Activated B cell treated with CpG ODN at 0.5 μM for 24 hours (primary cell): ENCODE measurements at regions of chr6 and their contacts with region 1.

Region 1: DNA sequence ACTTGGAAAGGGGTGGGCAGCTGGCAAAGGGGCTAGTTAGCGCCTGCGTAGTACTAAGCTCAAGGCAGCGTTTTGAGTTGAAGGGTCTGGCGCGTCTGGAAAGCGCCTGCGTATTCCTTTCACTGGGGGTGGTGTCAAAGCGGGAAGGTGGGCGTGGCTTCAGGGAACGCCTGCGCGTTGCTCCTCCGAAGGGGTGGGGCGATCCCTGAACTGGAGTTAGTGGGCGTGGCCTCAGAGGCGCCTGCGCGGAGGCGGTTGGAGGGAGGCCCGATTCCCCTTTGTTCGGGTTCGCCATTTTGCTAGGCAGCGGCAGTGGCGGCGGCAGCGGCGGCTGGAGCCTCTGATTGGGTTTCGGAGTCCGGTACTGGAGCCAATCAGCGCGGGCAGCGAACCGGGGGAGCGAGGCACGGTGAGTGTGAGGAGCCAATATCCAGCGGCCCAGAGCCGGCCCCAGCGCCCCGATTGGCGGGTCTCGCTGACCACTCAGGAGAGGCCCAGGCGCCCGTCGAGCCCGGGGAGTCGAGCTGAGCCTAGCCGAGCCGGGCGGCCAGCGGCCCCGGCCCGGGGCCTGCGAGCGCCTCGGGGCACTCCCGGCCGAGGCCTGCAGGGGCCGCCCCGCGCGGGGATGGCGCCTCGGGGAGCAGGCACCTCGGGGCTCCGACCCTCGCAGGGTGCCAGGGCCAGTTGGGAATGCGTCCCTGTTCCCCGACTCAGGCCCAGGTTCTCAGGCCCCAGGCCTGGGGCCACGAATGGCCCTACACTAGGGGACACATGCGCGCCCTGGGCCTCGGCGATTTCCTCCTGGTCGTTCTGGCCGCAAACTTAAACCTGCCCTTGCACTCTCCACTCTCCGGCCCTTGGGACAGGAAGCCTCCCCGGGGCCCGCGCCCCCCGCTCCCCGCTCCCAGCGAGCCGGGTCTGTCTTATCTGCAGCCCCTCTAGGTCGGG is at the start of gene NFYA:
- DNase-seq: peak; percentile 100
- ATAC-seq: peak; percentile 63
- H3K4me3 Mint-ChIP-seq: peak within 1 kb of the TSS; percentile 96
- H3K27ac Mint-ChIP-seq: peak within 1 kb of the TSS; percentile 98
- H3K4me1 Mint-ChIP-seq: peaks cover 47% of the 10 kb centered on the region
- H3K27me3 Mint-ChIP-seq: no peaks in the 10 kb centered on the region
- CTCF ChIP-seq: no peak
- total RNA-seq, gene NFYA: 33.7 and 35.1 TPM in 2 replicates

Region 2: DNA sequence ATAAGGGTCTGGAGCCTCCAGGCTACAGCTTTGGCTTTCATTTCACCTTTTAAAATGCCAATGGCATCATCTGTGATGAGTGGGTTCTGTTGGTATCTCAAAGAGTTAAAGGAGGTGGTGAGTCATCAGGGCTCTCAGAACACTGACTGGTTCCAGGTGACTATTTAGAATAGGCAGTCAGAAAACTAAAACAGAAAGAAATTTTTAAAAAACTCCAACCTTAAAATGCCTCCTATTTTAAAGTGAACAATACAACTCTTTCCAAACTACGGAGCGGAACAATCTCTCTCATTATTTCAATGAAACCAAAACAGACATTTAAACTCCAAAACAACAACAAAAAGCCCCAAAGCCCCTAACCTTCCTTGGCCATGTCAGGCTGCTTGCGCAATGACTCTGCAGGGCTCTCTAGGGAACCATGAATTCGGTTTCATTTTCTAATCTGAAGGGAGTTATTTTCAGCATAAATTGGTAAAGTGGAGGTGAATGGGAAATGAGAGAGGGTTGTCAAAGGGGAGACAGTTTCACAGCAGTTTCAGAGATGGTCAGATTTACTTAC is 1542.7 kb before region 1 on chr6:
- CTCF ChIA-PET with region 1: no interaction called
- POLR2A ChIA-PET with region 1: no interaction called
- intact Hi-C with region 1: no loop called
- DNase-seq: no peak
- ATAC-seq: peak; percentile 90
- H3K4me3 Mint-ChIP-seq: peak overlapping the region; percentile 64
- H3K27ac Mint-ChIP-seq: peak overlapping the region; percentile 69
- H3K4me1 Mint-ChIP-seq: peaks cover 14% of the 10 kb centered on the region
- H3K27me3 Mint-ChIP-seq: peaks cover 9% of the 10 kb centered on the region
- CTCF ChIP-seq: no peak

Region 3: DNA sequence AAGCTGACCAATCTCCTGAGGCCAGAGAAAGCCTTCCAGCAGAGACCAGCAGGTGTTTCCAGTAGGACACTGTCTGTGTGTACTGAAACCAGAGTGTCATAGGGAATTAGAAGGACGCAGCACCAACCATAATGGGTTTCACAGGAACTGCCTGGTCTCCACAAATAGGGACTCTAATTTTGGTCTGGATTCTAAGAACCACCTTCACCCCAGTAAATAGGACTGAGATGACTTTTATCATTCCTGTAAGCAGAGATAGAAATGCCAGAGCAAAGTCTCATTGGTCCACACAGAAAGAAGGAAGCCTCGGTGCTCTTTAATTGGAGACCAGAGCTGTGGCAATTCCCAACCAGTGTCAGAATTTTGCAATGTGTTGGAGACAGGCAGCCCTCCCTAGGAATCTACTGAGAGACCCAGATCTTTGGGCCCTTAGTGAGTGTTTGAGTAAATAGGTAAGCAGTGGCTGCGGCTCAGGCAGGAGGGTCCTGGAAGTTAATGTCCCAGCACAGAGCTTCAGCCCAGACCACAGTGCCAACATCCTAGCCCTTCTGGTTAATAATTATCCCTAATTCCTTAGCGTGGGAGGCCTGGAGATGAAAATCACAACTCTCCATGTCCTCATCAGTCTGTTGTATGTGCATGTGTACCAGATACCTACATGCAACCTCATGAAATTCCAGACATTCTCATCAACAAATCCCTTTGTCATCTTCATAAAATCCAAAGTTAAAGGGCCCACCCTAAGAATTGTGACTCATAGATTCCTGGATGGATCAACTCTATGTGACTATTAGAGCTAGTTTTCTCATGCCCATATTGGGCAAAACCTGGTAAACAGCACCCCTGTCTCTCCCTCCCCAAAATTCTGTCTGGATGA is 115.1 kb before region 1 on chr6:
- CTCF ChIA-PET with region 1: no interaction called
- POLR2A ChIA-PET with region 1: no interaction called
- intact Hi-C with region 1: no loop called
- DNase-seq: no peak
- ATAC-seq: no peak
- H3K4me3 Mint-ChIP-seq: no peak overlapping the region
- H3K27ac Mint-ChIP-seq: no peak overlapping the region
- H3K4me1 Mint-ChIP-seq: no peaks in the 10 kb centered on the region
- H3K27me3 Mint-ChIP-seq: peaks cover 2% of the 10 kb centered on the region
- CTCF ChIP-seq: no peak

Region 4: DNA sequence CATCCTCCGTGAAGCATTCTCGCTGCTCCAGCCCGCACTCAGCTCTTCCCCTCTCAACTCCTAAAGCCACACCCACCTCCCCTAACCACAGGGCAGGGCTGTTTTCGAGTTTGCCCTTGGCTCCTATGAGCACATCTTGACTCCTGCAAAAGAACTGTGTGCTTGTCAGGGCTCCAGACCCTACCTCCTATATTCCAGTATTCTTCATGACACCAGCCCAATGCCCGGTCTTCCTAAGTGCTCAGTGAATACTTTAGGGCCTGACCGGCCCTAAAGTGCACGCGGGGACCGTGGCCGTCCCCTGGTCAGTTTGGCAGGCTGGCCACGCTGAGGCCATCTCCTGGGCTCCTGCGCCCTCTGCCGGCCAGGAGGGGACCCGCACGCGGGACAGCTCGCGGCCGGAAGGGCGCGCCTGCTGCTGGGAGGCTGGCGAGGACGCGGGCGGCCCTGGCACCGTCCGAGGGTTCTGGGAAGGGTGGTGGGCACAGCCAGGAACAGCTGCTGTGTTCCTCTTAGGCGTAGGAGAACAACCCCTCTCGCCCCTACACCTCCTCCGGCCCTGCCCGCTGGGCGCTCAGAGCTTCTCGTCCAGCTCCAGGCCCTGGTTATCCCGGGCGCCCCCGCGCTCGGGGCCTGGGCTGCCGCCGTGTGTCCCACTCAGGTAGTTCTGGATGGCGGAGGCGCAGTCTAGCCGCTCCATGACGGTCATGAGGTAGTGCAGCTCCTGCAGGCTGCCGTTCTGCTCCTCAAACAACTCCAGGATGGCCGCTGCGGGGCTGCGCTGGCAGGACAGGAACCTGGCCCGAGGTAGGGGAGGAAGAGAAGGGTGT is 44.9 kb before region 1 on chr6:
- CTCF ChIA-PET with region 1: interaction called, 7 read pairs
- POLR2A ChIA-PET with region 1: interaction called, 10 read pairs
- intact Hi-C with region 1: no loop called
- DNase-seq: peak; percentile 80
- ATAC-seq: peak; percentile 89
- H3K4me3 Mint-ChIP-seq: peak overlapping the region; percentile 84
- H3K27ac Mint-ChIP-seq: peak overlapping the region; percentile 20
- H3K4me1 Mint-ChIP-seq: peaks cover 20% of the 10 kb centered on the region
- H3K27me3 Mint-ChIP-seq: no peaks in the 10 kb centered on the region
- CTCF ChIP-seq: peak; percentile 92

Region 5: DNA sequence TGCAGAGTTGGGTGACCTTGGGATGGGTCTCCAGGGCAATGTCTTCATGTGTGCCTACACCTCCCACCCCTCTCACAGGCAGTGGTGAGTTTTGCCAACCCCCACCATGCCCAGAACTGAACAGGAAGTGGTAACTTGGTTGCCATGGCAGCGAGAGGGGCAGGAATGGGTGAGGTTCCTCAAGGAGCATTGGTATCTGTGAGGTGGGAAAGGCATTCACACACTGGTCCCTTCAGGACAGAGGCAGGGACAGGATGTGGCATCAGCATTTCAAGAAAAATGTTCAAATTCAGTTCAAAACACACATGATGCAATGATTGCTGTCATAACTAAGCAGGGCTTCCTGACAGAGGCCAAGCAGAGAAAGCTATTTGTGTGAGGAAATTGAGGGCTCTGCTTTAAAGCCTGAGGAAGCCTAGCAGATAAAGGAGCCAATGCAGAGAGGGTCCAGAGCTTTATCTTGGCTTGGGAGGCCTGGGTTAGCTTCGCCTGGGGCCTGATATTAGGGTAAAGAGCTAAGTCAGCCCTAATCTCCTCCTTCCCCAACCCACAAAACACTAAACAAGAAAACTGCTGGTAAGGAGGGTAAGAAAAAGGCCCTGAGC is 127.4 kb after region 1 on chr6:
- CTCF ChIA-PET with region 1: no interaction called
- POLR2A ChIA-PET with region 1: interaction called, 10 read pairs
- intact Hi-C with region 1: loop called (anchors 1 kb)
- DNase-seq: no peak
- ATAC-seq: peak; percentile 29
- H3K4me3 Mint-ChIP-seq: peak overlapping the region; percentile 75
- H3K27ac Mint-ChIP-seq: peak overlapping the region; percentile 96
- H3K4me1 Mint-ChIP-seq: peaks cover 86% of the 10 kb centered on the region
- H3K27me3 Mint-ChIP-seq: no peaks in the 10 kb centered on the region
- CTCF ChIP-seq: no peak

Region 6: GRCh38 chr6:41334482-41335040 is 261.6 kb after region 1 on chr6:
- CTCF ChIA-PET with region 1: no interaction called
- POLR2A ChIA-PET with region 1: interaction called, 13 read pairs
- intact Hi-C with region 1: no loop called
- DNase-seq: no peak
- ATAC-seq: no peak
- H3K4me3 Mint-ChIP-seq: peak overlapping the region; percentile 57
- H3K27ac Mint-ChIP-seq: peak overlapping the region; percentile 90
- H3K4me1 Mint-ChIP-seq: peaks cover 49% of the 10 kb centered on the region
- H3K27me3 Mint-ChIP-seq: no peaks in the 10 kb centered on the region
- CTCF ChIP-seq: no peak

Region 7: DNA sequence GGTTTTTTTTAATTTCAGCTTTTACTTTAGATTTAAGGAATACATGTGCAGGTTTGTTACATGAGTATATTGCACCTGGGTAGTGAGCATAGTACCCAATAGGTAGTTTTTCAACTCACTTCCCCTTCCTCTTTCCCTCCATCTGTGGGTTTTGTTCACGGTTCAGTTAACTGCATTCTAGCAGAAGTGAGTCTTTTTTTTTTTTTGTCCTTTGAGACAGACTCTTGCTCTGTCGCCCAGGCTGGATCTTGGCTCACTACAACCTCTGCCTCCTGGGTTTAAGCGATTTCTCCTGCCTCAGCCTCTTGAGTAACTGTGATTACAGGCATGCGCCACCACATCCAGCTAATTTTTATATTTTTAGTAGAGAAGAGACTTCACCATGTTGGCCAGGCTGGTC is 1499.6 kb after region 1 on chr6:
- CTCF ChIA-PET with region 1: no interaction called
- POLR2A ChIA-PET with region 1: no interaction called
- intact Hi-C with region 1: loop called (anchors 2 kb)
- DNase-seq: peak; percentile 25
- ATAC-seq: peak; percentile 91
- H3K4me3 Mint-ChIP-seq: peak overlapping the region; percentile 63
- H3K27ac Mint-ChIP-seq: peak overlapping the region; percentile 91
- H3K4me1 Mint-ChIP-seq: peaks cover 47% of the 10 kb centered on the region
- H3K27me3 Mint-ChIP-seq: no peaks in the 10 kb centered on the region
- CTCF ChIP-seq: no peak